Posterior vena cava (tissue), 2 donors: ENCODE measurements at regions of chr1 and their contacts with region 1.

Region 1: DNA sequence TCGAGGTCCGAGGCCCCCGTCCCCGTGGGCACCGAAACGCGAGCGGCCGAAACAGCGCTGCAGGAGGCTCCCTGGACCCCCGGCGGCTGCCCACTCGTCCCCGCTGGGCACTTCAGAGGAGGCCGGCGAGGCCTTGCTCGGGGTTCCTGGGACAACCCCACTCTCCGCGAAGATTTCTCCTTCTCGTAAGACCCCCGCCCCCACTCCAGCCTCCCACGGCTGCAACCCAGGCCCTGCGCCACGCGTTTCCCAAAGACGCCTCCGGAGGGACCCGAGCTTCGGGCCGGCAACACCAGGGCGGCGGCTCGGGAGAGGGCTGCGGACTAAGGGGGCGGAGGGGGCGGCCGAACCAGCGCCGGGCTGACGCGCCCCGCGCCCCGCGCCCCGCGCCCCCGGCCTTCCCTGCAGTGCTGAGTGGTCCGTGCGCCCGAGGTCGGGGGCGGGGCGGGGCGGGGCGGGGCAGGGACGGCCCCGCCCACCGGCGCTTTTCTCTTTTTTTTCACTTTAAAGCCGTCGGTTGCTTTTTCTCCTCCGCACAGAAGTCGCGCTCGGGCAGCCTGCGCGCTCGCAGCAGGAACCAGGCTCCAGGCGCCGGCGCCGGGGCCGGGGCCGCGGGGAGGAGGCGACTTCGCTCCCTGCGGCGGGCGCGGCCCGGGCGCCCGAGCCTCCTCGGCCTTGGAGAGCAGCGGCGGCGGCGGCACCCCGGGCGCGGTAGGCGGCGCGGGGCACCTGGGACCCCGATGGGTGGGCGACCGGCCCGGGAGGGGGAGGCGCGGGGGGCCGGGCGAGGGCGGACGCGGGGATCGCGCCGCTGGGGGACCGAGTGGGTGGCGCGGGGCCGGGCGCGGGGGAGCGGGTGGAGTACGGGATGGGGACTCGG is at the start of gene SPSB1:
- DNase-seq: peak; percentile 91
- total RNA-seq, gene SPSB1: 30.9 to 48.0 TPM

Region 2: DNA sequence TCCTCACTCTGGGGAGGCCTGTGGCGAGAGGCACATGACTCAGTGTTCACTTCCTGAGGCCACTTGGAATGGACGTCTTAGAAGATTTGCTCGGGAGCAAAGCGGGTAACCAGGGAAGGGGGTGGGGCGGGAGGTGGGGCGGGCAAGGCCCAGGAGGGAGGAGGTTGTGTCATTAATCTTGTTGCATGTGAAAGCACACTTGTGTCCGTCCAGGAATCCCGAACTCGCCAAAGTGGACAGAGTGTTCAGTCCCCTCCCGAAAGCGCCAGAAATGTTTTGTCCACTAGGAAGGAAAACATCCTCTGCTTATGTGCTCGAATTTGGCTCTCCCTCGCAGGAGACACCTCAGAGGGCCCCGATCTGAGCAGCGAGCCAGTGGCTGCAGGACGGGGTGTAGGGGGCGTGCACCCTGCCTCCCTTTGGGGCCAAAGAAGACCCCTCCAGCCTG is 84.3 kb after region 1 on chr1:
- intact Hi-C with region 1: loop called in 1 of 2 experiments (anchors 5 kb)
- DNase-seq: no peak

Region 3: DNA sequence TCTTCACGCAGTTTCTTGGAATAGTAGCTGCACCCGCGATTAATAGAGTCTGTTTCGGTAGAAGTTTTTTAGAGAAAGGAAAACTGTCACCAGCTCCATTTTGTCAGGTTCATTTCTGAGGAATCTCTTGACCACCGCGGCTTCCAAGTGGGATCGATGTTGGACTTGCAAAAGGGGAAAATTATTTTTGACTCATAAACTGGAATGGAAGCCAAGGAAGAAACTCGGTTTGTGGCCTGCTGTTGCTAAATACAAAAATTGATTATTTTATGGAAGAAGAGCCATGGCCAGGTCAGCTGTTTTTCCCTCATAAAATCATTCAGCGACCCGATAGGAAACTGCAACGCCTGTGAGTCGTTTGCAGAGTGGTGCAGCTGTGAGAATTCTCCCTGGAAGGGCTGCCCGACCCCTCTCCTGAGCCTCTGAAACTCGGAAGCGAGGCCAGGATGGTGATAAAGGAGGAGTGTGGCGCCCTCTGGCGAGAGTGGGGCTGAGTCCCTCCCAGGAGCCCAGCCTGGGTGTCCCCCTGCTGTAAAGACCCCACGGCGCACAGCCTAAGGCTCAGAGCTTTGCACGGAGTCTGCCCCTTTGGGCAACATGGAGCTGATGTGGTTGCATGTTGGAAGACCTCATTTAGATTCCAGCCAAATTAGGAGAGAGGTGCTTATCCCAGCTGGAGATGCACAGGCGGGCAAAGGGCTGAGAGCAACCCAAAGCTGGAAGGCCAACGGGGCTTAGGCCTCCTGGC is 163.1 kb after region 1 on chr1:
- intact Hi-C with region 1: loop called in 1 of 2 experiments (anchors 5 kb)
- DNase-seq: peak; percentile 89

Region 4: DNA sequence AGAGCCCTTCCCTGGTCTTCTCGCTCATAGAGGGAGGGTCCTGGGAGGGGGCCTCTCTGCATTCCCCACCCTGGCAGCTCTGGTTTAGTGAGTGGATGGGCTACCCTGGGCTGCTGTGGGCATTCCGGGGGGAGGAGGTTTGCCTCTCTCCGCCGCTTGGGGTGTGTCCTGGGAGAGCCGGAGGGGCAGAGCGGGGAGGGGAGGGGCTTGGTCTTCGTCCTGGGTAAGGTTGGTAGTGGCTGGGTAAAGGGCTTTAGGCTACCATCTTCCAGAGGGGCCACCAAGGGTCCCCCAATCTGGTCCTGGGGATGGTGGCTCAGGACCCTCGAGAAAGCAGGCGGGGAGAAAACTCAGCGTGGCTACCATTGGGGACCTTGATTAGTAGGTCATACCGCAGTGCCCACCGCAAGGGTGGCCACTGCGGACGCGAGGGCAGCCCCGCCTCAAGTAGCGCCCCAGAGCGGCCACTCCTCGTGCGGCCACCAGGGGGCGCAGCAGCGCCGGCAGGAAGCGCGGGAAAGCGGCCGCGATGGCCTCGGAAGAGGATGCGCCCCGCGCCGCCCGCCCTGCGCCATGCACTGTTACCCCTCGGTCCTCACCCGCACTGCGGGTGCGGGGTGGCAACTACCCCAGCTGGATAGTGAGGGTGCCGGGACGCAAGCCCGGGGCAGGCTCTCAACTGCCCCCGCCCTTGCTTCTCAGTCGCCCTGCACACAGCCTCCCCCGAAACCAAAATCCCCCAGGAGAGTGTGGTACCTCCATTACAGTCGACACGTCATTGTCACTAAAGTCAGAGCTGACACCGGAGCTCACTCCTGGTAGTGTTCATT is 202.5 kb after region 1 on chr1:
- intact Hi-C with region 1: loop called in 1 of 2 experiments (anchors 5 kb)
- DNase-seq: peak; percentile 86